ENCODE measurements at regions of chr7 and their contacts with region 1.

Region 1: GRCh38 chr7:7681179-7681935 is 37.0 kb downstream of the RPA3 start:
- DNase-seq: no peak
- H3K4me3 ChIP-seq: no peak overlapping the region
- CTCF ChIP-seq: peak; percentile 16

Region 2: GRCh38 chr7:7542251-7542835 is 139.0 kb before region 1 on chr7:
- CTCF ChIA-PET with region 1: no interaction called
- POLR2A ChIA-PET with region 1: no interaction called
- DNase-seq: no peak
- H3K4me3 ChIP-seq: no peak overlapping the region
- CTCF ChIP-seq: no peak

Region 3: GRCh38 chr7:7640221-7641128 is 40.9 kb before region 1 on chr7 and contains the start of gene UMAD1:
- CTCF ChIA-PET with region 1: interaction called, 12 read pairs
- POLR2A ChIA-PET with region 1: interaction called, 5 read pairs
- DNase-seq: peak; percentile 90
- H3K4me3 ChIP-seq: peak within 1 kb of the TSS; percentile 99
- CTCF ChIP-seq: no peak

Region 4: GRCh38 chr7:7696458-7697119 is 15.2 kb after region 1 on chr7:
- CTCF ChIA-PET with region 1: interaction called, 59 read pairs
- POLR2A ChIA-PET with region 1: no interaction called
- DNase-seq: no peak
- H3K4me3 ChIP-seq: peak overlapping the region; percentile 13; the same call in 1 of the 2 replicates
- CTCF ChIP-seq: no peak

Region 5: GRCh38 chr7:7751243-7752092 is 70.1 kb after region 1 on chr7:
- CTCF ChIA-PET with region 1: interaction called, 144 read pairs
- POLR2A ChIA-PET with region 1: no interaction called
- DNase-seq: no peak
- H3K4me3 ChIP-seq: no peak overlapping the region
- CTCF ChIP-seq: no peak

Region 6: GRCh38 chr7:8035647-8036518 is 354.5 kb after region 1 on chr7:
- CTCF ChIA-PET with region 1: interaction called, 13 read pairs
- POLR2A ChIA-PET with region 1: no interaction called
- DNase-seq: no peak
- H3K4me3 ChIP-seq: no peak overlapping the region
- CTCF ChIP-seq: peak; percentile 48

Region 7: GRCh38 chr7:8217200-8218068 is 536.1 kb after region 1 on chr7:
- CTCF ChIA-PET with region 1: interaction called, 25 read pairs
- POLR2A ChIA-PET with region 1: no interaction called
- DNase-seq: peak; percentile 19
- H3K4me3 ChIP-seq: no peak overlapping the region
- CTCF ChIP-seq: peak; percentile 20